ENCODE measurements at regions of chr4 and their contacts with region 1.

Region 1: GRCh38 chr4:76067652-76068286 is 6.7 kb upstream of the ART3 start:
- H3K4me3 ChIP-seq: no peak overlapping the region
- H3K27ac ChIP-seq: no peak overlapping the region
- H3K4me1 ChIP-seq: no peaks in the 10 kb centered on the region
- CTCF ChIP-seq: no peak

Region 2: DNA sequence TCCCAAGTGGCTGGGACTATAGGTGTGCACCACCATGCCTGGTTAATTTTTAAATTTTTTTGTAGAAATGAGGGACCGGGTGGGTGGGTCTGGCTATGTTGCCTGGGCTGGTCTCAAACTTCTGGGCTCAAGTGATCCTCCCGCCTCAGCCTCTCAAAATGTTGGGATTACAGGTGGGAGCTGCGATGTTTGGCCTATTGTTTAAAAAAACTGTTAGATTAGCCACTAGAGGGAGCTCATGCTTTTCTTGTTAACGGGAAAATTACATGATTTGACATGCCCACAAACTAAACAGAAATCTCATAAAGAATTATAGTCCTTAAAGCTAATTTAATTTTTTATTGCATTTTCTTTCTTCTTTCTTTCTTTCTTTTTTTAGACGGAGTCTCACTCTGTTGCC is 72.0 kb before region 1 on chr4:
- CTCF ChIA-PET with region 1: interaction called, 10 read pairs
- POLR2A ChIA-PET with region 1: no interaction called
- H3K4me3 ChIP-seq: no peak overlapping the region
- H3K27ac ChIP-seq: no peak overlapping the region
- H3K4me1 ChIP-seq: no peaks in the 10 kb centered on the region
- CTCF ChIP-seq: peak; percentile 33; the same call in 1 of the 2 replicates